A549 (cell line): ENCODE measurements at regions of chr2 and their contacts with region 1.

Region 1: GRCh38 chr2:20186078-20186854 is 38.7 kb downstream of the SDC1 start:
- DNase-seq: peak; percentile 42 to 64
- ATAC-seq: no peak
- H3K4me3 ChIP-seq: no peak overlapping the region
- H3K27ac ChIP-seq: peak overlapping the region; percentile 90 to 98
- H3K4me1 ChIP-seq: peaks cover 65% of the 10 kb centered on the region
- CTCF ChIP-seq: no peak
- EP300 ChIP-seq: no peak
- POLR2A ChIP-seq: no peak
- RAD21 ChIP-seq: no peak

Region 2: GRCh38 chr2:20207051-20207450 is 20.8 kb after region 1 on chr2:
- CTCF ChIA-PET with region 1: interaction called, 36 read pairs
- POLR2A ChIA-PET with region 1: no interaction called
- DNase-seq: no peak
- ATAC-seq: no peak
- H3K4me3 ChIP-seq: no peak overlapping the region
- H3K27ac ChIP-seq: peak overlapping the region; percentile 51 to 66; a peak in 2 of 6 replicates
- H3K4me1 ChIP-seq: peaks cover 33% of the 10 kb centered on the region
- CTCF ChIP-seq: no peak
- EP300 ChIP-seq: no peak
- POLR2A ChIP-seq: no peak
- RAD21 ChIP-seq: no peak

Region 3: GRCh38 chr2:20212459-20212870 is 26.2 kb after region 1 on chr2:
- CTCF ChIA-PET with region 1: interaction called, 12 read pairs
- POLR2A ChIA-PET with region 1: no interaction called
- DNase-seq: no peak
- ATAC-seq: no peak
- H3K4me3 ChIP-seq: no peak overlapping the region
- H3K27ac ChIP-seq: 0 out of 6 replicates have a peak overlapping the region, but pooled peaks of 1 of the 2 experiments have one; percentile 14
- H3K4me1 ChIP-seq: peaks cover 53% of the 10 kb centered on the region
- CTCF ChIP-seq: no peak
- EP300 ChIP-seq: no peak
- POLR2A ChIP-seq: no peak
- RAD21 ChIP-seq: no peak